Ascending aorta (tissue), 2 donors: ENCODE measurements at regions of chr16 and their contacts with region 1.

Region 1: GRCh38 chr16:23556881-23557778 is at the starts of genes EARS2 and UBFD1:
- DNase-seq: peak; percentile 95 to 99
- H3K4me3 ChIP-seq: peak within 1 kb of the TSS; percentile 88 to 94
- H3K27ac ChIP-seq: peak within 1 kb of the TSS; percentile 87 to 97
- H3K4me1 ChIP-seq: peaks cover 8 to 20% of the 10 kb centered on the region in 2 donors
- H3K27me3 ChIP-seq: no peaks in the 10 kb centered on the region
- CTCF ChIP-seq: peak; percentile 86 to 91 (median 88)
- total RNA-seq, gene EARS2: 16.8 TPM
- total RNA-seq, gene UBFD1: 51.8 TPM

Region 2: DNA sequence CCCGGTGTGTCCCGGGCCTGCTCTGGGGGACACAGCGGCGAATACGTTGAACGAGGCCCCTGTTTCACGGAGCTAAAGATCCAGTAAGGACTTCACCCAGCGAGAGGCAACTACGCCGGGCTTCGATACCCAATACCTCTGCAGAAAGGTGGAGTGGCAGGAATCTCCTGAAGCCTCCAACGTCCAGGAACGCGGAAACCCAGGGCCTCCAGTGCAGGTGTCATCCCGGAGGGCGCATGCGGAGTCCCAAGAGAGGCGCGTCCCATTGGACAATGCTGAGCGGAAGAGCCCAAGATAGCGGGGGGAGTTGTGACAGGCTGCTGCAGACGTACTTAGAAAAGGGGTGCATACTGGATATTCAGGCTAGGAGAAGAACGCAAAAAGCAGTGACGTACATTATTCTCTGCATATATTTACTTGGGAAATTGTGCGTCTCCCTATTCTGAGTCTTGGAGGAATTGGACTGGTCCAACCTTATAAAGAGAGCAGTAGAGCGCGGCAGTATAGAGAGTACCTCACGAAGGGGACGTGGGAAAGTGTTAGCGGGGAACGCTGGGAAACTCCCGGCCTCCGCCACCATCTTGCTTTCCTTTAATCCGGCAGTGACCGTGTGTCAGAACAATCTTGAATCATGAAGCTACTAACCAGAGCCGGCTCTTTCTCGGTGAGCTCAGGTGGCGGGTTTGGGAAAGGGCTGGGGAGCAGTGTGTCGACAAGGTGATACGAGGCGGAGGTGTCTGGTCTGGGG is 1604.2 kb before region 1 on chr16 and contains the start of gene UQCRC2:
- intact Hi-C with region 1: loop called (anchors 2 kb)
- DNase-seq: peak; percentile 48 to 92
- H3K4me3 ChIP-seq: peak within 1 kb of the TSS; percentile 84 to 87
- H3K27ac ChIP-seq: peak within 1 kb of the TSS; percentile 92 to 94
- H3K4me1 ChIP-seq: peaks cover 6 to 20% of the 10 kb centered on the region in 2 donors
- H3K27me3 ChIP-seq: no peaks in the 10 kb centered on the region
- CTCF ChIP-seq: peak in 1 of 3 experiments; percentile 2
- total RNA-seq, gene UQCRC2: 66.3 TPM

Region 3: DNA sequence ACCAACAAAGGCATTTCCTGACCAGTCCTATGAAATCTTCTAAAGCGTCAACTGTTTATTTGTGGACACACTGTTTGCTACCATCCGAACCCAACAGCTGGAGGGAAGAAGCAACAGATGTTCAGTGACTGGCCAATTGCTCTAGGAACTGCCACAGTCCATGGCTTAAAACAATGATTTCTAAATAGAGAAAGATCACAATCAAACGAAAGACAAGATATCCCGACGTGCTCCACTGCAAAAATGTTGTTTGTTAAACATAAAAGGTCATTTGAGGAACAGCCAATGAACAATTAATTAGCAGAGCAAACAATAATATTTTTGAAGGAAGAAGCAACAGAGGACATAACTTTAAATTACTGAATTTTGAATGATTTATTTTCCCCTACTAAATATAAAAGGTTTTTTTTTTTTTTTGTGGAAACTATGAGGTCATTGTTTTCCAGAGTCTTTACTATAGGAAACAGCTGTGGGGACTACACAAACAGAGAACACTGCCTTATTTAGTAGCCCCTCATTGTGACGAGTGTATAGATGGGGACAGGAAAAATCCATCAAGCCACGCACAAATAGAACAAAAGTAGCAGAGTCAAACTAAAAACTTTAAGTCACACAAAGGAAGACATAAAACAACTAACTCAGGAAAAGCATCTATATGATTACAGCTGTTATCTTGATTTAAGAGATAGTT is 425.1 kb before region 1 on chr16:
- intact Hi-C with region 1: no loop called
- DNase-seq: no peak
- H3K4me3 ChIP-seq: peak overlapping the region; percentile 31 to 55
- H3K27ac ChIP-seq: peak overlapping the region; percentile 80 to 81
- H3K4me1 ChIP-seq: peaks cover 5 to 26% of the 10 kb centered on the region in 2 donors
- H3K27me3 ChIP-seq: no peaks in the 10 kb centered on the region
- CTCF ChIP-seq: no peak

Region 4: GRCh38 chr16:23408823-23409298 is 148.3 kb before region 1 on chr16:
- intact Hi-C with region 1: no loop called
- DNase-seq: no peak
- H3K4me3 ChIP-seq: no peak overlapping the region
- H3K27ac ChIP-seq: no peak overlapping the region
- H3K4me1 ChIP-seq: no peaks in the 10 kb centered on the region
- H3K27me3 ChIP-seq: no peaks in the 10 kb centered on the region
- CTCF ChIP-seq: no peak

Region 5: DNA sequence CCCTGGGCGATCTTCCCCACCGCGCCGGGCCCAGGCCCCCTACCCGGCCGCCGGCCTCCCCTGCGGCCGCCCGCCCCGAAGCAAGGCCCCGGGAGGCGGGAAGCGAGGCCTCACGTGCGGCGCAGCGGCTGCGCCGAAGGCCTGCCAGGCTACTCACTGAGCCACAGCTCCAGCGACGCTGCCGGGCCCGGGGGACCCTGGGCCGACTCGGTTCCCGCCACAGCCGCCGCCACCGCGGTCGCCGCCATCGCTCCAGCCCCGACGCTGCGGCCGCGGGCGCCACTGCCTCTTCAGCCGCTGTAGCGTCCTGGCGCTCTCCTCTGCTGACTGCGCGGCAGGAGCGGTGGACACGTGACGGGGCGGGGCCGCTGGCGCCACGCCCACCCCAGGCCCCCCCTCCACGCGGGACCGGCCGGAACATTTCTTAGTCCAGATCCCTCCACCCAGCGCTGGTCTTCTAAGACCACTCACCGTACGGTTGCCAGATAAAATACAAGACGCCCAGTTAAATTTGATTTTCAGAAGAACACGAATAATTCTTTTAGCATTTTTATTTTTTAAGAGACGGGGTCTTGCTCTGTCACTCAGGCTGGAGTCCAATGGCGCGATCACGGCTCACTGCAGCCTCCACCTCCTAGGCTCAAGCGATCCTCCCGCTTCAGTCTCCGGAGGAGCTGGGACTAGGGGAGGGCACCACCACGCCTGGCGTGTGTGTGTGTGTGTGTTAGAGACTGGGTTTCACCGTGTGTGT is 46.8 kb before region 1 on chr16 and contains the start of gene GGA2:
- intact Hi-C with region 1: loop called (anchors 1 kb)
- DNase-seq: peak; percentile 46 to 92
- H3K4me3 ChIP-seq: peak within 1 kb of the TSS; percentile 95 to 98
- H3K27ac ChIP-seq: peak within 1 kb of the TSS; percentile 59 to 92
- H3K4me1 ChIP-seq: peaks cover 0 to 10% of the 10 kb centered on the region in 2 donors
- H3K27me3 ChIP-seq: no peaks in the 10 kb centered on the region
- CTCF ChIP-seq: no peak
- total RNA-seq, gene GGA2: 10.7 TPM

Region 6: DNA sequence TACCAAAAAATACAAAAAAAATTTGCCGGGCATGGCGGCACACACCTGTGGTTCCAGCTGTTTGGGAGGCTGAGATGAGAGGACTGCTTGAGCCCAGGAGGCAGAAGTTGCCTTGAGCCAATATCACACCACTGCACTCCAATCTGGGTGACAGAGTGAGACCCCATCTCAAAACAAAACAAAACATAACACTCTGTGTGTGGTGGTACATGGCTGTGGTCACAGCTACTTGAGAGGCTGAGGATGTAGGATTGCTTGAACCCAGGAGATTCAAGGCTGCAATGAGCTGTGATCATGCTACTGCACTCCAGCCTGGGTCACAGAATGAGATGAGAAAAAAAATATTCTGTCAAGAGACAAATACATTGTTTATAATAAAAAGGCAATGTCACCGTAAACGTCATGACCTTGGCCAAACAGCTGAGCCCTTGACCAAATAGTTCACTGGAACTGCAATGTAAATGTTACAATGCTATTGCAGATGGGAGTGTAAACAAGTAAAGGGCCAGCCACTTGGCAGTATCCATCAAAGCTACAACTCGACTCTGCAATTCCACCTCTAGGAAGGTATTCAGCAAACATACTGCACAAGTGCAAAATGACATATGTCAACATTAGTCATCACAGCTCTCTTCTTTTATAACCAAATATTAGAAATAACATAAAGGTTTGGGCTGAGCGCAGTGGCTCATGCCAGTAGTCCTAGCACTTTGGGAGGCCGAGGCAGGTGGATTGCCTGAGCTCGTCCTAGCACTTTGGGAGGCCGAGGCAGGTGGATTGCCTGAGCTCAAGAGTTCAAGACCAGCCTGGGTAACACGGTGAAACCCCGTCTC is 16.9 kb before region 1 on chr16:
- intact Hi-C with region 1: no loop called
- DNase-seq: no peak
- H3K4me3 ChIP-seq: no peak overlapping the region
- H3K27ac ChIP-seq: no peak overlapping the region
- H3K4me1 ChIP-seq: no peaks in the 10 kb centered on the region
- H3K27me3 ChIP-seq: no peaks in the 10 kb centered on the region
- CTCF ChIP-seq: no peak

Region 7: DNA sequence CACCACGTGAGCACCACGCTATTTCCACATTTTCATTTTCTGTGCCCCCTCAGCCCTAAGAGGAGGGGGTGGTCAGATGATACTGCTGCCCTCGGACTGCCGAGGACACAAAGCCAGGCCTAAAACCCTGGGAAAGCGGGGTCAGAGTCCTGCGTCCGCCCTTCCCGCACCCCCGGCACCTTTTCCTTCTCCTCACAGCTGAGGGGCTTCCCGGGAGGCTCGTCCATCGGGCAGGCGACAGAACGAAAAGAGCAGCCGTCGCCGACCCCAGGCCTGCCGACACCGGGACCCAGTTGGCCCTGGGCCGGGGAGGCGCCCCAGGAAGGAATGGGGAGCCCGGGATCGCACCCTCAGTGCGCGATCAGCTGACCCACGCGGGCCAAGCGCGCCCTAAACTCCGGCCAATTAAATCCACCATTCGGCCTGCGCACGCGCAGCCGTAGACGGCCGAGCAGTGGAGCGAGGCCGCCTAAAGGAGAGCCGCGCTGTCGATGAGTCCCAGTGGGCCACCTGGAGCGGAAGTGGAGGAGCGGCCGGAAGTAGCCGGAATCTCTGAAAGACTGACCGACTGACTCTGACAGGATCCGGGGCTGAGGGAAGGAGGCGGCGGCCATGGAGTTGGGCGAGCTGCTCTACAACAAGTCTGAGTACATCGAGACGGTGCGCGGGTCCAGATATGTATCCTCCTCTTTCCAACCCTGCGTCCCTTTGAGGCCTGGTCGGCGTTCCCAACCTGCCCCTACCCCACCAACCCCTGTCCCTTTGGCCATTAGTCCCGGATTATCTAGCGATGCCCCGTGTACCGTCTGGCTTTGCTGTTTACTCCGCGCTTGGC is 84.0 kb after region 1 on chr16 and contains the starts of genes DCTN5 and PALB2:
- intact Hi-C with region 1: loop called (anchors 2 kb)
- DNase-seq: peak; percentile 80 to 97
- H3K4me3 ChIP-seq: peak within 1 kb of the TSS; percentile 64 to 99
- H3K27ac ChIP-seq: peak within 1 kb of the TSS; percentile 72 to 86
- H3K4me1 ChIP-seq: peaks cover 5 to 18% of the 10 kb centered on the region in 2 donors
- H3K27me3 ChIP-seq: no peaks in the 10 kb centered on the region
- CTCF ChIP-seq: no peak
- total RNA-seq, gene DCTN5: 16.7 TPM
- total RNA-seq, gene PALB2: 2.1 TPM

Region 8: GRCh38 chr16:23678430-23679273 is 121.5 kb after region 1 on chr16 and contains the start of gene PLK1:
- intact Hi-C with region 1: no loop called
- DNase-seq: peak in 1 of 2 donors; percentile 79
- H3K4me3 ChIP-seq: peak within 1 kb of the TSS; percentile 57 to 66
- H3K27ac ChIP-seq: no peak within 1 kb of the TSS
- H3K4me1 ChIP-seq: peaks cover 4 to 10% of the 10 kb centered on the region in 2 donors
- H3K27me3 ChIP-seq: no peaks in the 10 kb centered on the region
- CTCF ChIP-seq: peak in 2 of 3 experiments; percentile 14 to 50
- total RNA-seq, gene PLK1: 35.2 TPM

Region 9: GRCh38 chr16:25031441-25032307 is 1474.5 kb after region 1 on chr16:
- intact Hi-C with region 1: loop called (anchors 10 kb)
- DNase-seq: peak; percentile 76 to 94
- H3K4me3 ChIP-seq: peak overlapping the region; percentile 79 to 93
- H3K27ac ChIP-seq: peak overlapping the region; percentile 44 to 70
- H3K4me1 ChIP-seq: peaks cover 0 to 9% of the 10 kb centered on the region in 2 donors
- H3K27me3 ChIP-seq: no peaks in the 10 kb centered on the region
- CTCF ChIP-seq: no peak